B cell (primary cell): ENCODE measurements at regions of chrX and their contacts with region 1.

Region 1: GRCh38 chrX:20530406-20530921 is 263.8 kb upstream of the RPS6KA3 start:
- DNase-seq: peak; percentile 60
- ATAC-seq: peak; percentile 47
- H3K4me3 ChIP-seq: no peak overlapping the region
- H3K4me3 Mint-ChIP-seq: no peak overlapping the region
- H3K27ac ChIP-seq: no peak overlapping the region
- H3K27ac Mint-ChIP-seq: no peak overlapping the region
- H3K4me1 ChIP-seq: no peaks in the 10 kb centered on the region
- H3K4me1 Mint-ChIP-seq: peaks cover 2% of the 10 kb centered on the region
- H3K27me3 ChIP-seq: peaks cover 0 to 14% (median 3%) of the 10 kb centered on the region in 4 experiments
- H3K27me3 Mint-ChIP-seq: peaks cover 24% of the 10 kb centered on the region
- CTCF ChIP-seq: peak; percentile 75

Region 2: DNA sequence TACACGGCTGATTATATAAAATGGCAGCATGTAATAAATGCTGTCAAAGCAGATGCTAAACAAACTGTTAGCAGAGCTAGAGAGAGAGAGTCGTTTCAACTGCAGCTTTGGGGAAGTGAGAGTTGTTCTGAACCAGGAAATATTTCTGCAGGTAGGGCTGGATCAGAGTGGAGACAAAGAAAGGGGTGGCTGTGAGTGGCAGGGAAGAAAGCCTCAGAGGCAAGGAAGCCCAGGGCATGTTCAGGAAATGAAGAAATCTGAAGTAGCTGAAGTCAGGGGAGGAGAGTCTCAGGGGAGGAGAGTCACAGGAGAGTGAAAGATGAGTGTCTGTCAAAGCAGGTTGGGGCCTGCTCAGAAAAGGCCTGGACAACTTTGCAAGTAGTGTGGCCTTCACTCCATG is 215.3 kb before region 1 on chrX:
- CTCF ChIA-PET with region 1: no interaction called
- POLR2A ChIA-PET with region 1: no interaction called
- intact Hi-C with region 1: no loop called
- DNase-seq: peak; percentile 57
- ATAC-seq: peak; percentile 88
- H3K4me3 ChIP-seq: no peak overlapping the region
- H3K4me3 Mint-ChIP-seq: peak overlapping the region; percentile 7
- H3K27ac ChIP-seq: peak overlapping the region in 1 of 2 donors; percentile 20
- H3K27ac Mint-ChIP-seq: peak overlapping the region; percentile 87
- H3K4me1 ChIP-seq: peaks cover 33 to 47% of the 10 kb centered on the region in 2 donors
- H3K4me1 Mint-ChIP-seq: peaks cover 56% of the 10 kb centered on the region
- H3K27me3 ChIP-seq: no peaks in the 10 kb centered on the region
- H3K27me3 Mint-ChIP-seq: no peaks in the 10 kb centered on the region
- CTCF ChIP-seq: no peak

Region 3: GRCh38 chrX:20515841-20516461 is 14.5 kb before region 1 on chrX:
- CTCF ChIA-PET with region 1: interaction called, 19 read pairs
- POLR2A ChIA-PET with region 1: no interaction called
- intact Hi-C with region 1: no loop called
- DNase-seq: peak; percentile 5
- ATAC-seq: peak; percentile 49
- H3K4me3 ChIP-seq: no peak overlapping the region
- H3K4me3 Mint-ChIP-seq: no peak overlapping the region
- H3K27ac ChIP-seq: no peak overlapping the region
- H3K27ac Mint-ChIP-seq: no peak overlapping the region
- H3K4me1 ChIP-seq: peaks cover 4 to 5% of the 10 kb centered on the region in 2 donors
- H3K4me1 Mint-ChIP-seq: peaks cover 9% of the 10 kb centered on the region
- H3K27me3 ChIP-seq: no peaks in the 10 kb centered on the region
- H3K27me3 Mint-ChIP-seq: peaks cover 4% of the 10 kb centered on the region
- CTCF ChIP-seq: no peak

Region 4: DNA sequence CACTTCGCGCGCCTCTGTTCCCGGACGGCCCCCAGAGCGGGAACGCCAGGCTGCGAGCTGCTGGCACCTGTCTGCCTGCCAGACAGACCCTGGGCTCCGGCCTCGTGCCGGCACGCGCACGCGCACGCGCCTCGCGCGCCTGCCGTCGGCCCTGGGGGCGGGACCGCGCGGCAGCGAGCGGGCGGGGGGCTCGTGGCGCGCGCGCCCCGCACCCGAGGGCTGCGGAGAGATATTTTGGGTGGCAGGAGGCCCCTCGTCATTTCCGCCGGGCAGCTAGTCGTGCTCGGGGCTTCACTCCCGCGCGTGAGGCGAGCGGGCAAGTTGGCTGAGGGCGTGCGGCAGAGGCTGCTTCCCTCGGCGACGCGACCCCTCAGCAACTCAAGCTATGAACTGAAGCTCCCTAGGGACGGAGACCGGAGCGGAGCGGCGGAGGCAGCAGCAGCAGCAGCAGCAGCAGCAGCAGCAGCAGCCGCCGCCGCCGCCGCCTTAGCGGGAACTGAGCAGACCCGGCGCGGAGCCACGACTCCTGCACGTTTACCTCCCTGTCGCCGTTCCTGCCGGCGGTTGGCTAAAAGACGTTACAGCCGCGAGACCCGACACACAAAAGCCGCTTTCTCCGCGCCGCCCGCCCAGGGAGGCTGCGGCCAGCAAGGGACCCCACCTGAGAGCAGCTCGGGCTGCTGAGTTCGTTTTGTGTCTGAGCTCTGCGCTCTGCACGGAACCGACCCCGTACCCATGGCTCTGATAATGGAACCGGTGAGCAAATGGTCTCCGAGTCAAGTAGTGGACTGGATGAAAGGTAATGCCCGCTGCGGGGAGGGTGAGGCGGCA is 843.9 kb after region 1 on chrX and contains the start of gene CNKSR2:
- CTCF ChIA-PET with region 1: no interaction called
- POLR2A ChIA-PET with region 1: no interaction called
- intact Hi-C with region 1: loop called (anchors 10 kb)
- DNase-seq: peak; percentile 87
- ATAC-seq: peak; percentile 76
- H3K4me3 ChIP-seq: peak within 1 kb of the TSS in 4 of 5 experiments; percentile 74 to 83 (median 82)
- H3K4me3 Mint-ChIP-seq: peak within 1 kb of the TSS; percentile 92
- H3K27ac ChIP-seq: peak within 1 kb of the TSS; percentile 73 to 84
- H3K27ac Mint-ChIP-seq: peak within 1 kb of the TSS; percentile 90
- H3K4me1 ChIP-seq: peaks cover 6 to 18% of the 10 kb centered on the region in 2 donors
- H3K4me1 Mint-ChIP-seq: peaks cover 32% of the 10 kb centered on the region
- H3K27me3 ChIP-seq: no peaks in the 10 kb centered on the region
- H3K27me3 Mint-ChIP-seq: no peaks in the 10 kb centered on the region
- CTCF ChIP-seq: no peak
- total RNA-seq, gene CNKSR2: 18.8 and 22.5 TPM in 2 replicates

Region 5: GRCh38 chrX:21479695-21480270 is 949.3 kb after region 1 on chrX:
- CTCF ChIA-PET with region 1: interaction called, 129 read pairs
- POLR2A ChIA-PET with region 1: no interaction called
- intact Hi-C with region 1: loop called (anchors 1 kb)
- DNase-seq: peak; percentile 69
- ATAC-seq: peak; percentile 84
- H3K4me3 ChIP-seq: no peak overlapping the region
- H3K4me3 Mint-ChIP-seq: no peak overlapping the region
- H3K27ac ChIP-seq: no peak overlapping the region
- H3K27ac Mint-ChIP-seq: peak overlapping the region; percentile 41
- H3K4me1 ChIP-seq: peaks cover 0 to 4% of the 10 kb centered on the region in 2 donors
- H3K4me1 Mint-ChIP-seq: peaks cover 5% of the 10 kb centered on the region
- H3K27me3 ChIP-seq: no peaks in the 10 kb centered on the region
- H3K27me3 Mint-ChIP-seq: no peaks in the 10 kb centered on the region
- CTCF ChIP-seq: peak; percentile 76

Region 6: DNA sequence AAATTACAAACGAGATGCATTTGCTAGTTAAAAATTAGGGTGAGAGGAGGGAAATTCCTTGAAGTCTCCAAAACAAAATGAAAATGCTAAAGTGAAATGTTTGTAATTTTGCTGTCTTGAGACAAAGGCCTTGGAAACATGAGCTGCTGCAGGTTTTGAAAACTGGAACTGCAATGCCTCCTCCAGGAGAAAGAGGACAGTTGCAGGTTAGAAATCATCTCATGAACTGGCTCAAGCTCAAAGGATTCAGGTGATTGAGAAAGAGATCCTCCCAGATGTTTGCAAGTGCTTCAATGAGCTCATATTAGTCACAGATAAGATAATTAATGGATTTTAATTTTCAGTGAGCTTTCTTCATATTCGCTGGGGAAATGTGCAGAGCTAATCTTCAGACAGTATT is 1195.0 kb after region 1 on chrX:
- CTCF ChIA-PET with region 1: interaction called, 24 read pairs
- POLR2A ChIA-PET with region 1: no interaction called
- intact Hi-C with region 1: loop called (anchors 1 kb)
- DNase-seq: peak; percentile 32
- ATAC-seq: no peak
- H3K4me3 ChIP-seq: no peak overlapping the region
- H3K4me3 Mint-ChIP-seq: no peak overlapping the region
- H3K27ac ChIP-seq: no peak overlapping the region
- H3K27ac Mint-ChIP-seq: no peak overlapping the region
- H3K4me1 ChIP-seq: no peaks in the 10 kb centered on the region
- H3K4me1 Mint-ChIP-seq: no peaks in the 10 kb centered on the region
- H3K27me3 ChIP-seq: no peaks in the 10 kb centered on the region
- H3K27me3 Mint-ChIP-seq: peaks cover 11% of the 10 kb centered on the region
- CTCF ChIP-seq: peak; percentile 31

Region 7: DNA sequence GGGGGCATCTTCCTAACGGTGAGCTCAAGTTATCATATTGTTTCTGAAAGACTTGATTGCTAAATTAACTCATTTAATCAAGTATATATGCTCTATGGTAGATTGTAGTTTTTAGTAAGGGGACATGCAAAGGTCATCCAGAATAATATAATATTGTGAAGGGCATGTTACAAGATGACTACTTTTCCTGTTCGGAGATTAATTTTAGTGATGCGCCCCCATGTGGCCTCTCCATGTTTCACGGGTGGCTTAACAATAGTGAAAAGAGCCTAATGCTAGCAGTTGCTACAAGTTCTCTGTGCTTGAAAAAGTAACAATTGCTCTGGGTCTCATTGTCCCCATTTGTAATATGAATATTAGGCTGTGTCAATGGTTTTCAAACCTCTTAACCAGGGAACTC is 1215.3 kb after region 1 on chrX:
- CTCF ChIA-PET with region 1: interaction called, 88 read pairs
- POLR2A ChIA-PET with region 1: no interaction called
- intact Hi-C with region 1: loop called (anchors 1 kb)
- DNase-seq: peak; percentile 43
- ATAC-seq: no peak
- H3K4me3 ChIP-seq: no peak overlapping the region
- H3K4me3 Mint-ChIP-seq: no peak overlapping the region
- H3K27ac ChIP-seq: no peak overlapping the region
- H3K27ac Mint-ChIP-seq: no peak overlapping the region
- H3K4me1 ChIP-seq: no peaks in the 10 kb centered on the region
- H3K4me1 Mint-ChIP-seq: no peaks in the 10 kb centered on the region
- H3K27me3 ChIP-seq: peaks cover 0 to 4% (median 0%) of the 10 kb centered on the region in 4 experiments
- H3K27me3 Mint-ChIP-seq: peaks cover 12% of the 10 kb centered on the region
- CTCF ChIP-seq: peak; percentile 64

Region 8: DNA sequence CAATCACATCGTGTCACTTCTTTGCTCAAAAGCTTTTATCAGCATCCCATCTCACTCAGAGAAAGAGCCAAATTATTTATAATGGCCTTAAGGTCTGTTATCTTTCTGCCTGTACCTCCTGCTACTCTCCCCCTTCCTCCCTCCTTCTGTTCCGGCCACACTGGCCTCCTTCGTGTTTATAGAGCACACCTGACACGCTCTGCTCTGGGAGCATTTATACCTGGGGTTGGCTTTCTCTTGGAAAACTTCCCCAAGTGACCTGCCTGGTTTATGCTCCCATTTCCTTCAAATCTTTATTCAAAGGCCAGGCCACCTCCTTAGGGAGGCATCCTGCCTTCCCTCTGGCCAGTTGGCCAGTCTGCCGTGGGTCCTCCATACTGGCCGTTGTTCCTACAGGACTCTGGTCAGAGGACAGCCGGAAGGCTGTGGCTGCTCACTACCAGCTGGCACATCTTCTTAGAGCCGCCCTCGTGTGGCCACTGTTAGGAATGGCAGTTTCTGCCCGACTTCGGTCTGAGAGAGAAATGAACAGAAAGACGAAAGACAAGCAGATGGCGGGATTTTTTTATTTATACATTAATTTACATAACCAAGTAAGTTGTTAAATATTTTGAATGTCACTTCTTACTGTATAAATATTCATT is 1662.1 kb after region 1 on chrX:
- CTCF ChIA-PET with region 1: no interaction called
- POLR2A ChIA-PET with region 1: no interaction called
- intact Hi-C with region 1: loop called (anchors 5 kb)
- DNase-seq: peak; percentile 60
- ATAC-seq: peak; percentile 64
- H3K4me3 ChIP-seq: no peak overlapping the region
- H3K4me3 Mint-ChIP-seq: peak overlapping the region; percentile 42
- H3K27ac ChIP-seq: no peak overlapping the region
- H3K27ac Mint-ChIP-seq: no peak overlapping the region
- H3K4me1 ChIP-seq: peaks cover 17 to 18% of the 10 kb centered on the region in 2 donors
- H3K4me1 Mint-ChIP-seq: peaks cover 16% of the 10 kb centered on the region
- H3K27me3 ChIP-seq: no peaks in the 10 kb centered on the region
- H3K27me3 Mint-ChIP-seq: no peaks in the 10 kb centered on the region
- CTCF ChIP-seq: peak; percentile 81